Astrocyte of the cerebellum (primary cell): ENCODE measurements at regions of chr16 and their contacts with region 1.

Region 1: GRCh38 chr16:49755313-49755620 is 100.6 kb downstream of the ZNF423 start:
- DNase-seq: peak; percentile 51
- H3K4me3 ChIP-seq: peak overlapping the region; percentile 10
- CTCF ChIP-seq: peak; percentile 67

Region 2: DNA sequence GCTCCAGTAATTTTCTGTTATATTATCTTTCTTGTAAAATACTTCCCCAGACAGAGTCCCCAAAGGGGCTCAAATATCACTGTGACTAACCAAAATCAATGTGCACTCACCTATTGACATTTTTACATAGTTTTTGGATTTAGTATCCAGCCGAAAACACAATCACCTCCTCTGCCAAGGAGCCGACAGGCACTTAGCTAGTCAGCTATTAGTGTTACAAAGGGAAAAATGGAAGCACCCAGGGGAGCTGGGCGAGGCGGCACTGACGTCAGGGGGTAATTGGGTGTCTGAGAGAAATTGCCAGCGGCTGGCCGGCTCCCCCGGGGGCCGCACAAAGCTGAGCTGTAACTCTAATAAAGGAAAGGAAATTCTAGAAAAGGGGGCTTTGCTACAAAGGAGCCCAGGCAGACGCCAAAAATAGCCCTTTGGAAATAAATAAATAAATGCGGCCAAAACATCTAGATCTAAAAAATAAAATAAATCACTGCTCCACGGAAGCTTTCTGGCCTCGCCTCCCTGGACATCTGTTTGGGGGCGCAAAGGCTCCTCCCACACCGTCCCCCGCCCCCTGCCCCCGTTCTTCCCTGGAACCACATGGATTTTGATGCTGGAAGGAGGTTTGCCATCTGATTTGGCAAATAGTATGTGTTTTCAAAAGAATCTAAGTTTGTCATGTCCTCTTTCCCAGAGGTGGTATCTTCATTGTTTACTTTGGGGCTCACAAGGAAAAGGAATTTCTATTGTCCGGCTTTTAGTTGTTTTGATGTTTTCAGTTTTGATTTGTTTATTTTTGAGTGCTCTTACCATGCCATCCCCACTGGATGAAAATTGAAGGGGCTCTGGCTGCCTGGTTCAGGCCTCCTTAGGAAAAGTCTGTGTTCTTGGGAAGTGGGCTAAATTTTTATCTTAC is 56.1 kb before region 1 on chr16:
- in situ Hi-C with region 1: loop called (anchors 5 kb)
- DNase-seq: no peak
- H3K4me3 ChIP-seq: no peak overlapping the region
- CTCF ChIP-seq: no peak